ENCODE measurements at regions of chr19 and their contacts with region 1.

Region 1: GRCh38 chr19:13952154-13953035 is at the start of gene DCAF15:
- DNase-seq: peak; percentile 99
- ATAC-seq: peak; percentile 99
- total RNA-seq, gene DCAF15: 18.0 TPM

Region 2: DNA sequence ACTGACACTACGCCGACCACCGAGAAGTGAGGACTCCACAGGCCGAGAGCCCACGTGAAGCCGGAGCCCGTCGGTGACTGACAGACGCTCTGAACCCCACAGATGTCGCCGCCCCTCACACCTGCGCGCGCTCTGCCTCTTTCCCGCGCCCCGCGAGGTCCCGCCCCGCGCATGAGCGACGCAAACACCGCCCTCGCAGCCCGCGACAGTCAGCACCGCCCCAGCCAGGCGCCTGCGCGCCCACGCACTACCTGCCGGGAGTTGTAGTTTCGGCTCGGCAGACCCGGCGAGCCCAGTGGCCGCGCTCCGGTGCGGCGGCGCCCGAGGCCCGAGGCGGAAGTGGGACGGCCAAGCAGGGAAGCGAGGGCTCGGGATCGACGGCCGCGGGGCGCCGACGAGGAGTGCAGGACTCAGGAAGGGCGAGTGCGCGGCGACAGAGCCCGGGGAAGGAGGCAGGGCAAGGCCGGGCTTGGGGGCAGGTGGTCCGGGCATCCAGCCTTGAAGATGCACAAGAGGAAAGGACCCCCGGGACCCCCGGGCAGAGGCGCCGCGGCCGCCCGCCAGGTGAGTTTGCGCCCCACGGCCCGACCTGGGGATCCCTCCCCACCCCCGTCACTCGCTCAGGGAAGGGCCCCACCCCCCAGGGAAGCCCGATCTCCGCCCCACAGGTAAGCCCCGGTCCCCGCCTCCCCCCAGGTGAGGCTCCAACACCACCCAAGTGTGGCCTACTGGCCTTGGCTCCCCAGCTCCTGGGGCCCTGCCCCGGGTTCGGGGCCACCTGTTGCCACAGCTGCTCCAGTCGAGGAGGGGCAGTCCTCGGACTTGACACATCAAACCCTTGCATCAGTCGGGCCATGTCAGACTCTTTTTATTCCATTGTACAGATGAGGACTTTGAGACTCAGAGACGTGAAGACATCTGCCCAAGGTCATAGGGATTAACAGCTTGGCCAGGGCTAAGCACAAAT is 46.2 kb before region 1 on chr19 and contains the starts of genes BRME1 and CC2D1A:
- intact Hi-C with region 1: loop called (anchors 2 kb)
- DNase-seq: peak; percentile 97
- ATAC-seq: peak; percentile 99
- total RNA-seq, gene BRME1: 0.76 TPM
- total RNA-seq, gene CC2D1A: 18.7 TPM

Region 3: GRCh38 chr19:13962699-13963602 is 10.6 kb after region 1 on chr19:
- intact Hi-C with region 1: no loop called
- DNase-seq: peak; percentile 49
- ATAC-seq: no peak

Region 4: DNA sequence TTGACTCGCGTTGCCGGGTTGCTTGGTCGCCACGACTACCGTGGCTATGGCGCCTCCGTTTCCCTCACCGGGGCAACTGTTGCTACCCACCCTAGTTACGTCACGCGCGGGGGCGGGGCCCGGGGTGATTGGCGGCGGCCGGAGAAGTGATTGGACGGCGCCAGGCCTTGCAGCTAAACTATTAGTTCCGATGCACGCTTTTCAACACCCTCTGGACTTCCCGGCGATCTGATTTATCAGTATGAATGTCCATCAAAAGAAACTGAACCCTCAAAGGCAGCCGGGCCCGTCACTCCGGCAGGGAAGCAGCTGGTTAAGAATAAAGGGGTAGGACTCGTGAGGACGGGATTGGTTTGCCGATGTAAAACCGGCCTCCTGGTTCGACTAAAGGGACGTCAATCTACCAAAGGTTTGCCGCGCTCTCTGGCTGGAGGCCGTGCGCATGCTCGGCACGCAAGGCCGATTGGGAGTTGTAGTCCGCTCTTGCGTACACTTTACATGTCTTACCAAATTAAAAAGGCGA is 53.9 kb after region 1 on chr19 and contains the start of gene RFX1:
- intact Hi-C with region 1: loop called (anchors 2 kb)
- DNase-seq: peak; percentile 100
- ATAC-seq: peak; percentile 88
- total RNA-seq, gene RFX1: 15.4 TPM

Measured in Right ventricle myocardium inferior (tissue), 1 donor.